Dendritic cell treated with granulocyte-macrophage colony-stimulating factor and Interleukin-4, amounts not matched to agents 40 ng/mL and 50 ng/mL, for 4 days (primary cell): ENCODE measurements at regions of chr5 and their contacts with region 1.

Region 1: GRCh38 chr5:141313711-141314110 is 6.9 kb downstream of the TAF7 start:
- H3K4me3 Mint-ChIP-seq: no peak overlapping the region
- H3K27ac Mint-ChIP-seq: no peak overlapping the region
- H3K4me1 Mint-ChIP-seq: peaks cover 7% of the 10 kb centered on the region
- H3K27me3 Mint-ChIP-seq: no peaks in the 10 kb centered on the region

Region 2: DNA sequence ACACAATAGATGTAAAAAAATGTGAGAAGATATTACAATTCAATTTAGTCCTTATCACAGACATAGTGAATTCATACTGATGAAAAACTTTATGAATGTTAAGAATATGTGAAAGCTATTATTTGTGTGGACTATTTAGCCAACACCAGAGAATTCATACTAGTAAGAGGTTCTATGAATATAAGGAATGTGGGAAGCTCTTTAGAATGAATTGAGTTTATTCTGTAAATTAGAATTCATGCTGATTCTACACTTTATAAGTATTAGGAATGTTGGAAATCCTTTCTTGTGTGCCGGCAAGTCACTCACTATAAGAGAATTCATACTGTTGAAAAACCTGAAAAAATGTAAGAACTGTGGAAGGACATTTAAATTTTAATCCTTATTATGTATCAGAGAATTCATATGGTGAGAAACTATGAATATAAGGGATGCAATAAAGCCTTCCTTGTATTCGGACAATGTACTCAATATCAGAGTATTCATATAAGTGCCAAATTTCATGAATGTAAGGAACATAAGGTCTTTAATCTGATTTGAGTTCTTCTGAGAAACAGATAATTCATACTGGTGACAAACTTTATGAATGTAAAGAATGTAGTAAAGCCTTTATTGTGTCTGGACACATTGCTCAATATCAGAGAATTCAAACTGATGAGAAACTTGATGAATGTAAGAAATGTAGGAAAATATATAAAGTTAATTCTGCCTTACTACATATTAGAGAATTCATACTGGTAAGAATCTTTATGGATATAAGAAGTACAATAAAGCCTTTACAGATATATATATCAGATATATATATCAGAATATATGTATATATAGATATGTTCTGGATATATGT is 549.3 kb before region 1 on chr5:
- intact Hi-C with region 1: loop called (anchors 10 kb)
- H3K4me3 Mint-ChIP-seq: no peak overlapping the region
- H3K27ac Mint-ChIP-seq: no peak overlapping the region
- H3K4me1 Mint-ChIP-seq: no peaks in the 10 kb centered on the region
- H3K27me3 Mint-ChIP-seq: no peaks in the 10 kb centered on the region

Region 3: DNA sequence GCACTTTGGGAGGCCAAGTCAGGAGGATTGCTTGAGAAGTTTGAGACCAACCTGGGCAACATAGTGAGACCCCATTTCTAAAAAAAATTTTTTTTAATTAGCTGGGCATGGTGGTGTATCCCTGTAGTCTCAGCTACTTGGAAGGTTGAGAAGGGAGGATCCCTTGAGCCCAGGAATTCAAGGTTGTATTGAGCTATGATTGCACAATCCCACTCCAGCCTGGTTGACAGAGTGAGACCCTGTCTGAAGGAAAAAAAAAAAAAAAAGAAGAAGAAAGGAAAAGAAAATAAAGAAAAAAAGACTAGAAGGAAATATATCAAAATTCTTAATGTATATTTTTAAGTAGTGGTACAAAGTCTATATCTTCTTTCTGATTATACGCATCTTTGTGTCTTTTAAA is 291.3 kb before region 1 on chr5:
- intact Hi-C with region 1: no loop called
- H3K4me3 Mint-ChIP-seq: no peak overlapping the region
- H3K27ac Mint-ChIP-seq: no peak overlapping the region
- H3K4me1 Mint-ChIP-seq: no peaks in the 10 kb centered on the region
- H3K27me3 Mint-ChIP-seq: no peaks in the 10 kb centered on the region

Region 4: GRCh38 chr5:141260458-141261237 is 53.1 kb before region 1 on chr5:
- intact Hi-C with region 1: loop called (anchors 10 kb)
- H3K4me3 Mint-ChIP-seq: no peak overlapping the region
- H3K27ac Mint-ChIP-seq: no peak overlapping the region
- H3K4me1 Mint-ChIP-seq: no peaks in the 10 kb centered on the region
- H3K27me3 Mint-ChIP-seq: no peaks in the 10 kb centered on the region

Region 5: DNA sequence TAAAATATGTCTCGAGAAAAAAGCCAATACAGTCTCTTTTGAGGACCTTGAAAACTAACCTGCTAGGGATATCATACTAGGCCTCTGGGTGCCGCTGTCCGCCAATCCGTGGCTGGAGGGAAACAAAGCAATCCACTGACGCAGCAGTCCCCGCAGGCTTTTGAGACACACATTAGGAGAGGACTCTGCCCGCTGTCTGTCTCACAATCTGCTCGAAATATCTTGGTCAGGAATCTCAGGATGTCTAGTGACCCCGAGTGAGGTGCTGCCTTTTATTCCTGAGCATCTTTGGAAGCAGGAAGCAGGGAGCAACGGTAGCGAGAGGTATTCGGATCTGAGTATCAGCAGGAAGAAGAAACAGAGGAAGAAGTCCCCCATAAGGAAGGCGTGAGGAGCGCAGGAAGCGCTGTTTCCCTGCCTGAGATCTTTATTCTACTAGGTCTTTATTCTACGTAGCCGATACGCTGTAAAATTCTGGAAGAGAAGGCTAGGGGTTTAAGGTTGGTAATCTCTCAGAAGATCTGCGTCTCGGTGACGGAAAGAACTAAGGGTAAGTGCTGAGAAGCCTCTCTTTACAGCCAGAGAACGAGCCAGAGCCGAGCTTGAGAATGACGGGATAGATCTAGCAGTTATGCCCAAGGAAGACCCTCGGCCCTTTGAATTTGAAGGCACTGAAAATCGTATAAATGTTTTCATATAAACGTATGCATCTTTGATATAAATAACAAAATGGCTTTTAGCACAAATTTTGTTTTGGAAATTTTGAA is 12.6 kb after region 1 on chr5:
- intact Hi-C with region 1: no loop called
- H3K4me3 Mint-ChIP-seq: peak overlapping the region; percentile 65
- H3K27ac Mint-ChIP-seq: no peak overlapping the region
- H3K4me1 Mint-ChIP-seq: peaks cover 6% of the 10 kb centered on the region
- H3K27me3 Mint-ChIP-seq: peaks cover 49% of the 10 kb centered on the region

Region 6: DNA sequence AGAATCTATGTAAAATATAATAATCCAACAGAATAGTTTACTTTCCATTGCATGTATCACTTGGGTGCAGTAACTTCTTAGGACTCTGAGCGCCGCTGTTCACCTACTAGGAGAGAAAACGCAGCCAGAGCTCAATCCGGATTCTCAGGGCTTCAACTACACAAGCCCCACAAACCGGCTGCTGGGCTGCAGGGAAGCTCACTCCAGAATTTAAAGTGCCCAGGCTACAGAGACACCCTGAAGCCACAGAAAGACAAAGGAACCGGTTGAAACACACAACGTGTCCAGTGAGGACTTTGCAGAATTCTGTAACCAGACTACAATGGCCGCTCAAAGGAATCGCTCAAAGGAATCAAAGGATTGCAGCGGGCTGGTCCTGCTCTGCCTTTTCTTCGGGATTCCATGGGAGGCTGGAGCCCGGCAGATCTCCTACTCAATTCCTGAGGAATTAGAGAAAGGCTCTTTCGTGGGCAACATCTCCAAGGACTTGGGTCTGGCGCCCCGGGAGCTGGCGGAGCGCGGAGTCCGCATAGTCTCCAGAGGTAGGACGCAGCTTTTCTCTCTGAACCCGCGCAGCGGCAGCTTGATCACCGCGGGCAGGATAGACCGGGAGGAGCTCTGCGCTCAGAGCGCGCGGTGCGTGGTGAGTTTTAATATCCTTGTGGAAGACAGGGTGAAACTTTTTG is 99.3 kb after region 1 on chr5 and contains the start of gene PCDHGA10:
- intact Hi-C with region 1: no loop called
- H3K4me3 Mint-ChIP-seq: peak within 1 kb of the TSS; percentile 66
- H3K27ac Mint-ChIP-seq: no peak within 1 kb of the TSS
- H3K4me1 Mint-ChIP-seq: peaks cover 26% of the 10 kb centered on the region
- H3K27me3 Mint-ChIP-seq: peaks cover 81% of the 10 kb centered on the region